ENCODE measurements at regions of chr12 and their contacts with region 1.

Region 1: DNA sequence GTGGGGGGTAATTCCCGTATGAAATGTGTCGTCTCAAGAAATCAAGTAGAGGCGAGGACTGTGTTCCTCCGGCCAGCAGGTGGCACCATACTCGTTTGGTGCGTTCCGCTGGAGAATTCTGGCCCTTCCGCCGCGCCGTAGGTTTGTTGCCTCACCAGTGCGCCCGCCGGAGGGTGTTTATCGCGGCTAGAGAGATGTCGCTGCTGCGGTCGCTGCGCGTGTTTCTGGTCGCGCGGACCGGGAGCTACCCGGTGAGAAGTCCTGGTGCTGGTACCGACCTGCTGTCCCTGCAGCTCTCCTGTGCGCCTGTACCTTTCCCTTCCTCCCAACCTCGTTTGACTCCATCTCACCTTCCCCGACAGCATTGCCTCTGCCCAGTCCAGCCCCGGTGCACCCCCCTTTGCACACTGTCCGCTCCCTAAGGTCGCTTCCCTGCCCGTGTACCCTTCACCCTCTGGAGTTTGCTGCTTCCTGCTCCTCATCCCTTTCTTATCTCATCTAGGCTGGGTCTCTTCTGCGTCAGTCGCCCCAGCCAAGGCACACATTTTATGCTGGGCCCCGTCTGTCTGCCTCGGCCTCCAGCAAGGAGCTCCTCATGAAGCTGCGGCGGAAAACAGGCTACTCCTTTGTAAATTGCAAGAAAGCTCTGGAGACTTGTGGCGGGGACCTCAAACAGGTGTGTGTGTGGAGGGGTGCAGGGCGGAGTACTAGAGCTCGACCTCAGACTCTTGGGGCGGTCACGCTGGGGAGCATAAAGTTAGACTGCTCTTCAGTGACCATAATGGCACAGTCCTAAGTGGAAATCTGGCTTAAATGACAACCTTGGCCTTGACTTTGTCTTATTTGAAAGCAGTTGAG is at the start of gene TSFM:
- H3K4me3 ChIP-seq: peak within 1 kb of the TSS; percentile 58
- H3K27ac ChIP-seq: peak within 1 kb of the TSS; percentile 11; the same call in 1 of the 2 replicates
- H3K4me1 ChIP-seq: no peaks in the 10 kb centered on the region
- CTCF ChIP-seq: peak; percentile 97

Region 2: GRCh38 chr12:57754411-57755193 is 28.2 kb before region 1 on chr12 and contains the start of gene MARCHF9:
- CTCF ChIA-PET with region 1: interaction called, 17 read pairs
- POLR2A ChIA-PET with region 1: interaction called, 3 read pairs
- H3K4me3 ChIP-seq: peak within 1 kb of the TSS; percentile 63
- H3K27ac ChIP-seq: peak within 1 kb of the TSS; percentile 69; the same call in 1 of the 2 replicates
- H3K4me1 ChIP-seq: peaks cover 16% of the 10 kb centered on the region
- CTCF ChIP-seq: no peak

Region 3: GRCh38 chr12:57771708-57772428 is 11.0 kb before region 1 on chr12 and contains the start of gene METTL1:
- CTCF ChIA-PET with region 1: interaction called, 9 read pairs
- POLR2A ChIA-PET with region 1: interaction called, 14 read pairs
- H3K4me3 ChIP-seq: peak within 1 kb of the TSS; percentile 93
- H3K27ac ChIP-seq: peak within 1 kb of the TSS; percentile 94
- H3K4me1 ChIP-seq: peaks cover 14% of the 10 kb centered on the region
- CTCF ChIP-seq: peak; percentile 66; the same call in 1 of the 2 replicates

Region 4: DNA sequence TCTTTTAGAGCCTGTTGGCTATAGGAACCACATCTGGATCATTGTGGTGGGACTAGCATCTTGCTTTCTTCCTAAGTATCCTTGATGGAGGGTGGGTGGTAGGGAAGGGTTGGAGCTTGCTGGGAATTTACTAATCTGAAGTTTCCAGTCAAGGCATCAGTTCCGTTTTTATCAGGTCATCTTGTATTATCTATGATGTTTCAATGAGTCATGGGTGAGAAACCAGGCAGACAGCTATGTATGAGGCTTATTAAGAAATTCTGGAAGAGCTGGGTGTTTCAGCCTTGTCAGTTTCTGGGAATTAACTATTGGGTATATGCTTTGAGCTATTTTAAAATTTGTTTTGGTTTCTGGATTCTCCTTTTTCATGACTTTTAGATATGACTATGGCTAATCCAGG is 11.1 kb after region 1 on chr12:
- CTCF ChIA-PET with region 1: interaction called, 19 read pairs
- POLR2A ChIA-PET with region 1: interaction called, 5 read pairs
- H3K4me3 ChIP-seq: no peak overlapping the region
- H3K27ac ChIP-seq: no peak overlapping the region
- H3K4me1 ChIP-seq: no peaks in the 10 kb centered on the region
- CTCF ChIP-seq: no peak

Region 5: DNA sequence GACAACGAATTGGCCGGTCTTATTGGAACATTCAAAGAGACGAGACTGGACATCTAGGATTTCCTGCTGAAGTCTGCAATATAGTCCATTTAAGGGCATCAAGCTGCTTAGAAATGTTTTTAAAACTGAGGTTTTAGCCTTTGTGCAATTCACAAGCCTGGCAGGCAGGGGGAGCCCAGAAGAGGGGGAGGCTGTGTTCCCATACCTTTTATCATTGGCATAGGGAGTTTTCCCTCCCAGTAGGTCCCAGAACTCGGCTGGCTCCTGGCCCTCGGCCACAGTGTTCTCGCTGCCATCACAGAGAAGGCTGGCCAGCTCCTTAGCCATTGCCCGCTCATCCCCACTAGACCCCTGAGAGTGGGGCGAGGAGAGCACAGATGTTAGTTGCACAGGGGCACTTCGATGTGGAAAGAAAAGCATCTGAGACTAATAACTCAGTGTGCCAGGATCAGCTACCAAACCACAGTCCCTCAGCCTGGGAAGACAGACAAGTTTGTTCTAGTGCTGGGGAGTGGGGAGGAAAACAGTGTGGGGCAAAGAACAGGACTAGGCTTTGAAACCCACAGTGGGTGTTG is 20.6 kb after region 1 on chr12:
- CTCF ChIA-PET with region 1: interaction called, 19 read pairs
- POLR2A ChIA-PET with region 1: interaction called, 5 read pairs
- H3K4me3 ChIP-seq: no peak overlapping the region
- H3K27ac ChIP-seq: no peak overlapping the region
- H3K4me1 ChIP-seq: no peaks in the 10 kb centered on the region
- CTCF ChIP-seq: peak; percentile 60

Region 6: GRCh38 chr12:57887631-57888408 is 105.0 kb after region 1 on chr12:
- CTCF ChIA-PET with region 1: no interaction called
- POLR2A ChIA-PET with region 1: no interaction called
- H3K4me3 ChIP-seq: no peak overlapping the region
- H3K27ac ChIP-seq: no peak overlapping the region
- H3K4me1 ChIP-seq: peaks cover 9% of the 10 kb centered on the region
- CTCF ChIP-seq: no peak

Measured in HEK293 (cell line).